ENCODE measurements at regions of chr1 and their contacts with region 1.

Region 1: GRCh38 chr1:32321712-32322291 is 14.2 kb downstream of the MARCKSL1 start:
- DNase-seq: peak; percentile 63 to 79
- H3K4me3 ChIP-seq: no peak overlapping the region
- H3K4me3 Mint-ChIP-seq: peak overlapping the region; percentile 60
- H3K27ac Mint-ChIP-seq: peak overlapping the region; percentile 74
- H3K4me1 ChIP-seq: peaks cover 17% of the 10 kb centered on the region
- H3K4me1 Mint-ChIP-seq: peaks cover 5% of the 10 kb centered on the region
- H3K27me3 ChIP-seq: no peaks in the 10 kb centered on the region
- H3K27me3 Mint-ChIP-seq: no peaks in the 10 kb centered on the region
- CTCF ChIP-seq: no peak

Region 2: GRCh38 chr1:32005522-32005921 is 316.3 kb before region 1 on chr1:
- CTCF ChIA-PET with region 1: no interaction called
- POLR2A ChIA-PET with region 1: no interaction called
- intact Hi-C with region 1: no loop called
- DNase-seq: no peak
- H3K4me3 ChIP-seq: no peak overlapping the region
- H3K4me3 Mint-ChIP-seq: no peak overlapping the region
- H3K27ac Mint-ChIP-seq: no peak overlapping the region
- H3K4me1 ChIP-seq: no peaks in the 10 kb centered on the region
- H3K4me1 Mint-ChIP-seq: no peaks in the 10 kb centered on the region
- H3K27me3 ChIP-seq: no peaks in the 10 kb centered on the region
- H3K27me3 Mint-ChIP-seq: no peaks in the 10 kb centered on the region
- CTCF ChIP-seq: no peak

Region 3: DNA sequence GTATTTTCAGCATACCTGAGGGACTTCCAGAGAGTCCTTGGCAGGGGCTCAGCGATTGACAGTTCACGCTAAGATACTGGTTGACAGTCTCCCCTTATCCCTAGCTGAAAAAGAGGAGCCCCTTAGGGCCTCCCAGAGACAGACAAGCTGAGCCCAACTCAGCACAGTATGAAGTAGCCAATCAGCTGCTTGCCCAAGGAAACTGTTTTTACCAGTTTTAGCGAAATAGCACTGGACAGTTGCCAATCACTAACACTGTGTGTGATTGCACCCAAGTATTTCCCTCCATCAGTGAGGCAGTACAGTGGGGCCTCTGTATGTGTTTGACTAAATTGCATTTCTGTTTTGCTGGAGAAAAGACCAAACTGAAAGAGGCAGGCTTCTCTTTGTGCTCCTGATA is 281.1 kb before region 1 on chr1:
- CTCF ChIA-PET with region 1: no interaction called
- POLR2A ChIA-PET with region 1: no interaction called
- intact Hi-C with region 1: no loop called
- DNase-seq: no peak
- H3K4me3 ChIP-seq: no peak overlapping the region
- H3K4me3 Mint-ChIP-seq: no peak overlapping the region
- H3K27ac Mint-ChIP-seq: no peak overlapping the region
- H3K4me1 ChIP-seq: no peaks in the 10 kb centered on the region
- H3K4me1 Mint-ChIP-seq: no peaks in the 10 kb centered on the region
- H3K27me3 ChIP-seq: no peaks in the 10 kb centered on the region
- H3K27me3 Mint-ChIP-seq: no peaks in the 10 kb centered on the region
- CTCF ChIP-seq: no peak

Region 4: GRCh38 chr1:32215629-32216480 is 105.9 kb before region 1 on chr1:
- CTCF ChIA-PET with region 1: interaction called, 4 read pairs
- POLR2A ChIA-PET with region 1: interaction called, 3 read pairs
- intact Hi-C with region 1: loop called (anchors 2 kb)
- DNase-seq: peak; percentile 65 to 70
- H3K4me3 ChIP-seq: no peak overlapping the region
- H3K4me3 Mint-ChIP-seq: no peak overlapping the region
- H3K27ac Mint-ChIP-seq: no peak overlapping the region
- H3K4me1 ChIP-seq: no peaks in the 10 kb centered on the region
- H3K4me1 Mint-ChIP-seq: no peaks in the 10 kb centered on the region
- H3K27me3 ChIP-seq: no peaks in the 10 kb centered on the region
- H3K27me3 Mint-ChIP-seq: no peaks in the 10 kb centered on the region
- CTCF ChIP-seq: peak; percentile 58 to 67

Region 5: DNA sequence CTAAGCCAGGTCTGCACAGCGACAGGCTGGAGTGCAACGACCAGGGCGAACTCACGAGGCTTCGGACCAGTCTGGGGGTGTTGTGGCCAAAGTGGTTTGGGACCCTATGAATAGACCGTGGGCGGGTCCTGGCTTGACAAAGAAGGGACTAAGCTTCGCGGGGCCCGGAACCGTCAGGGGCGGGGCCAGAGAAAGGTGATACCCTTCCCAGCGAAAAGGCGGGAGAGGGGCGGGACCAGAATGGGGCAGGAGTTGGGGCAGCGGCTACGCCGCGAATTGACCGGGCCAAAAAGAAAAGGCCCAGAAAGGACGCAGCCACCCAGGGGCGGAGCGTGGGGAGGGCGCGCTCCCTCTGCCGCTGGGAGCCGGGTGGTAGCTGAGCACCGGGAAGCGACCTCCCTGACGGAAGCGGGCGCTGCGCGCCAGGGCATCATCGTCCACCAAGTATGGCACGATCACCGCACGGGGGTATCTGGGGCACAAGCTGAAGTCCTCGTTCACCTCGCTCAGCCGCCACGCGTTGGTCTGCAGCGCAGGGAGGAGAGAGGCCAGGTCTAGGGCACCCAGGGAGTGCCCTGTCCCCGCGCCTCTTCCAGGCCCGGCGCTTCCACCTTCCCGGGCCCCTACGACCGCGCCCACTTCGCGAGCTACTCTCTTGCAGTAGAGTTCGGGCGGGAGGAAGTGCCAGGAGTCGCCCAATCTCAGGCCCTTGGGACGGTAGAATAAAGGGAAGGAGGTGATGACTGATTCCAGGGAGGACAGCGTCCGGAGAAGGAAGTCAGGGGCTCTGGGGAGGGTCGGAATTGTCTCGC is 81.5 kb before region 1 on chr1:
- CTCF ChIA-PET with region 1: no interaction called
- POLR2A ChIA-PET with region 1: no interaction called
- intact Hi-C with region 1: loop called (anchors 5 kb)
- DNase-seq: peak; percentile 61 to 72
- H3K4me3 ChIP-seq: peak overlapping the region; percentile 56
- H3K4me3 Mint-ChIP-seq: peak overlapping the region; percentile 79
- H3K27ac Mint-ChIP-seq: peak overlapping the region; percentile 83
- H3K4me1 ChIP-seq: no peaks in the 10 kb centered on the region
- H3K4me1 Mint-ChIP-seq: no peaks in the 10 kb centered on the region
- H3K27me3 ChIP-seq: no peaks in the 10 kb centered on the region
- H3K27me3 Mint-ChIP-seq: no peaks in the 10 kb centered on the region
- CTCF ChIP-seq: no peak

Region 6: GRCh38 chr1:32335790-32336590 is 14.2 kb after region 1 on chr1 and contains the start of gene MARCKSL1:
- CTCF ChIA-PET with region 1: interaction called, 9 read pairs
- POLR2A ChIA-PET with region 1: interaction called, 17 read pairs
- intact Hi-C with region 1: no loop called
- DNase-seq: peak; percentile 70 to 84
- H3K4me3 ChIP-seq: peak within 1 kb of the TSS; percentile 79
- H3K4me3 Mint-ChIP-seq: peak within 1 kb of the TSS; percentile 83
- H3K27ac Mint-ChIP-seq: peak within 1 kb of the TSS; percentile 59
- H3K4me1 ChIP-seq: peaks cover 22% of the 10 kb centered on the region
- H3K4me1 Mint-ChIP-seq: peaks cover 21% of the 10 kb centered on the region
- H3K27me3 ChIP-seq: no peaks in the 10 kb centered on the region
- H3K27me3 Mint-ChIP-seq: no peaks in the 10 kb centered on the region
- CTCF ChIP-seq: no peak
- total RNA-seq, gene MARCKSL1: 150 and 159 TPM in 2 replicates

Region 7: DNA sequence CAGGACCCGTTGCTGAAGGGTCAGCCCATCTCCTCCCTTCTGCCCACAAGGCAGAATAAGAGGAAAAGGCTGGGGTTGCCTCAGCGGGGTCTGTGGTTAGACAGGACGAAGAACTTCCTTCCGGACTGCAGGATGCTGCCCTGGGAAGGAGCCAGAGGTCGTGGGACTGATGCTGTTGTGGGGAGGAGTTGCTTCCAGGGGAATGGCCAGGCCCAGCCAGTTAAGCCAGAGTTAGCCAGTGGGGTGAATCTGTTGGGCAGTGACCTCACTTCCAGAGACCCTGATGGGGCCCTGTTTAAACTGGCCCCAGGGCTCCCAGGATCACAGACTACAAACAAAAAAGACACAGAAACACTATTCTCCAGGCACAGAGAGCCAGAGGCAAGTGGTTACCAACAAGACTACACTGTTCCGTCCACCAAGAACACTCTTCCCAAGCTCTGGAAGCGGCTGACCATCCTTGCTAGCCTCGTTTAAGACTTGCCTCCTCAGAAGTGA is 27.5 kb after region 1 on chr1:
- CTCF ChIA-PET with region 1: no interaction called
- POLR2A ChIA-PET with region 1: no interaction called
- intact Hi-C with region 1: no loop called
- DNase-seq: no peak
- H3K4me3 ChIP-seq: no peak overlapping the region
- H3K4me3 Mint-ChIP-seq: no peak overlapping the region
- H3K27ac Mint-ChIP-seq: no peak overlapping the region
- H3K4me1 ChIP-seq: peaks cover 4% of the 10 kb centered on the region; the same call in 1 of the 2 replicates
- H3K4me1 Mint-ChIP-seq: peaks cover 29% of the 10 kb centered on the region
- H3K27me3 ChIP-seq: no peaks in the 10 kb centered on the region
- H3K27me3 Mint-ChIP-seq: no peaks in the 10 kb centered on the region
- CTCF ChIP-seq: no peak